ENCODE measurements at regions of chr19 and their contacts with region 1.

Region 1: GRCh38 chr19:19444681-19445155 is 39.2 kb downstream of the GATAD2A start:
- DNase-seq: no peak
- H3K4me3 ChIP-seq: no peak overlapping the region
- H3K27ac ChIP-seq: no peak overlapping the region
- H3K4me1 ChIP-seq: peaks cover 16% of the 10 kb centered on the region
- H3K27me3 ChIP-seq: no peaks in the 10 kb centered on the region
- CTCF ChIP-seq: no peak

Region 2: DNA sequence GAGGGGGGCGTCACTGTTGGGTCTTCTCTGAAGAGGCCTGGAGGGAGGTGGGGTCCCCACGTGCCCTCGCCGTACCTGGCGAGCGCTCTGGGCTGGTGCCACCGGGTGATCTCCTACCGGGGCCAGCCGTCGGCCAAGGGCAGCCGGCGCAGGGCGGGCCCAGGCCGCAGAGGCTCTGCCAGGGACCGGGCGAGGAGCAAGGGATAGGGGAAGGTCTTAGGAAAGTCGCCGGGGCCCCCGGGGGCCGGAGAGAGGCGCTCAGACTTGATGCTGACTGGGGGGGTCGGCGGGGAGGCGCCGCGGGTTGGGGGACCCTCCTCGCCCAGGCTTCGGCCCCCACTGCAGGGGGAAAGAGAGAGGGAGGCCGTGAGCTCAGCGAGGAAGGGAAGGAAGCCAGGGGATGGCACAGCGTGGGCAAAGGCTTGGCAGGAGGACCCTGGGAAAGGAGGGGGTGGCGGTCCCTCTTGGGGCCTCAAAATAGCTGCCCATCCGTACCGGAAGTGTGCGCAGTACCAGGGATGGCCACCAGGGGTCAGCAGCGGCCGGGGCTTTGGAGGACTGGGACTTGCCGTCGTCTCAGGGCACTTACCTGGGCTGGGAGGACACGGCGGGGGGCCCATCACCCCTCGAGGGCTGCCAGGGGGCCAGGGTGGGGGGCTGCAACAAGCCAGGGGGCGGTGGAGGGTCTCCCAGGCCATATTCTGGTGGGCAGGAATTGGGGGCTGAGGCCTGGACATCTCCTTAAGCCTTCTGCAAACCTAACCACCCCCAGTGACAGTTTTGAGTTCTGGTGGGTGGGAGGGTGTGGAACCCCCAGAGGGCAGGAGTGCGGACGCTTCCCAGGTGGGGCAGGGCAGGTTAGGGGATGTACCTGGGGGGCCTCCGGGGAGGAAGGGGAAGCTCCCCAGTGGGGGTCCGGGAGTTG is 298.8 kb before region 1 on chr19:
- CTCF ChIA-PET with region 1: no interaction called
- POLR2A ChIA-PET with region 1: no interaction called
- intact Hi-C with region 1: no loop called
- DNase-seq: peak; percentile 48 to 79
- H3K4me3 ChIP-seq: no peak overlapping the region
- H3K27ac ChIP-seq: no peak overlapping the region
- H3K4me1 ChIP-seq: no peaks in the 10 kb centered on the region
- H3K27me3 ChIP-seq: no peaks in the 10 kb centered on the region
- CTCF ChIP-seq: peak; percentile 99

Region 3: DNA sequence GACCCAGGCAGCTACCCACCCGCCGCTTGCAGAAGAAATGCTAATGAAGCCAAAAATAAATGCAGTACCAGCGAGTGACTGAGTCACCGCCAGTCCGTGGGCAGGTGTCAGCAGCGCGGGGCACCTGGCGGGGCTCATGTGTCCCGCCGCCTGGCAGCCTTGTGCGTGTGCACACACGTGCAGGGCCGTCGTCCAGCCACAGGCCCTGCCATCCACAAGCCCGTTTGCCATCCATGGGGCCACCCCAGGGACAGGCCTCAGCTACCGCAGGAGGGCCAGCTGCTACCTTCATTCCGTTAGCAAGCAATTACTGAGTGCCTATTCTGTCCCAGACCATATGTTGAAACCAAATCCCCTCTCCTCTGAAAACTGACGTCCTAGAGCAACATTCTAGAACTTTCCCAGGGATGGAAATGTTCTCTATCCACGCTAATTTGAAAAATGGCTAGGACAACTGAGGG is 212.4 kb before region 1 on chr19:
- CTCF ChIA-PET with region 1: interaction called, 3 read pairs
- POLR2A ChIA-PET with region 1: interaction called, 10 read pairs
- intact Hi-C with region 1: no loop called
- DNase-seq: no peak
- H3K4me3 ChIP-seq: no peak overlapping the region
- H3K27ac ChIP-seq: no peak overlapping the region
- H3K4me1 ChIP-seq: no peaks in the 10 kb centered on the region
- H3K27me3 ChIP-seq: peaks cover 59% of the 10 kb centered on the region
- CTCF ChIP-seq: no peak

Measured in PC-9 (cell line).